ENCODE measurements at regions of chr10 and their contacts with region 1.

Region 1: GRCh38 chr10:2861632-2862210 is 205.6 kb upstream of the PFKP start:
- DNase-seq: no peak
- H3K4me3 ChIP-seq: no peak overlapping the region
- H3K27ac ChIP-seq: no peak overlapping the region
- H3K4me1 ChIP-seq: no peaks in the 10 kb centered on the region
- H3K27me3 ChIP-seq: peaks cover 0 to 10% of the 10 kb centered on the region in 2 donors
- CTCF ChIP-seq: no peak
- POLR2A ChIP-seq: no peak

Region 2: GRCh38 chr10:2890093-2890492 is 28.4 kb after region 1 on chr10:
- intact Hi-C with region 1: loop called (anchors 1 kb)
- DNase-seq: no peak
- H3K4me3 ChIP-seq: no peak overlapping the region
- H3K27ac ChIP-seq: no peak overlapping the region
- H3K4me1 ChIP-seq: no peaks in the 10 kb centered on the region
- H3K27me3 ChIP-seq: no peaks in the 10 kb centered on the region
- CTCF ChIP-seq: no peak
- POLR2A ChIP-seq: no peak